ENCODE measurements at regions of chr6 and their contacts with region 1.

Region 1: GRCh38 chr6:26065952-26066380 is 21.3 kb upstream of the HFE start:
- DNase-seq: peak; percentile 62
- H3K4me3 ChIP-seq: no peak overlapping the region
- H3K27ac ChIP-seq: no peak overlapping the region
- H3K27me3 ChIP-seq: no peaks in the 10 kb centered on the region
- CTCF ChIP-seq: peak; percentile 91

Region 2: DNA sequence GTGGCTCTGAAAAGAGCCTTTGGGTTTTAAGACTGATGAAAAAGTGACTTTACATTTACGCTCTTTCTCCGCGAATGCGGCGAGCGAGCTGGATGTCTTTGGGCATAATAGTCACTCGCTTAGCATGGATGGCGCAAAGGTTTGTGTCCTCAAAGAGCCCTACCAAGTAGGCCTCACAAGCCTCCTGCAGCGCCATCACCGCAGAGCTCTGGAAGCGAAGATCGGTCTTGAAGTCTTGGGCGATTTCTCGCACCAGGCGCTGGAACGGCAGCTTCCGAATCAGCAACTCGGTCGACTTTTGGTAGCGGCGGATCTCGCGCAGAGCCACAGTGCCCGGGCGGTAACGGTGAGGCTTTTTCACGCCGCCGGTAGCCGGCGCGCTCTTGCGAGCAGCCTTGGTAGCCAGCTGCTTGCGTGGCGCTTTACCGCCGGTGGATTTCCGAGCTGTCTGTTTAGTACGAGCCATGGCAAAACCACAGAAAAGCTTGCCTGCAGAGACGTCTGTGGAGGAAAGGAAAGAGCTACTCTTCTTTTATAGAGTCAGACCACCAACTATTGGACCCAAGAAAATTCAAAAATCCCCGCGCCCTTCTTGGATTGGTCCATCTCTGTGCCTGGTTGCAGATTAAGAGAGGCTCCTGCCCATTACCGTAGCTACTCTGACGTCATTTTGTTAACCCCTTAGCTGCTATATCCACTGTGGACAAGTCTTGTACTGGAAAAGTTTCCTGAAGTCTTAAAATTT is 34.2 kb before region 1 on chr6:
- CTCF ChIA-PET with region 1: interaction called, 15 read pairs
- POLR2A ChIA-PET with region 1: interaction called, 3 read pairs
- DNase-seq: peak; percentile 87
- H3K4me3 ChIP-seq: peak overlapping the region; percentile 68
- H3K27ac ChIP-seq: peak overlapping the region; percentile 92
- H3K27me3 ChIP-seq: no peaks in the 10 kb centered on the region
- CTCF ChIP-seq: peak; percentile 33

Region 3: DNA sequence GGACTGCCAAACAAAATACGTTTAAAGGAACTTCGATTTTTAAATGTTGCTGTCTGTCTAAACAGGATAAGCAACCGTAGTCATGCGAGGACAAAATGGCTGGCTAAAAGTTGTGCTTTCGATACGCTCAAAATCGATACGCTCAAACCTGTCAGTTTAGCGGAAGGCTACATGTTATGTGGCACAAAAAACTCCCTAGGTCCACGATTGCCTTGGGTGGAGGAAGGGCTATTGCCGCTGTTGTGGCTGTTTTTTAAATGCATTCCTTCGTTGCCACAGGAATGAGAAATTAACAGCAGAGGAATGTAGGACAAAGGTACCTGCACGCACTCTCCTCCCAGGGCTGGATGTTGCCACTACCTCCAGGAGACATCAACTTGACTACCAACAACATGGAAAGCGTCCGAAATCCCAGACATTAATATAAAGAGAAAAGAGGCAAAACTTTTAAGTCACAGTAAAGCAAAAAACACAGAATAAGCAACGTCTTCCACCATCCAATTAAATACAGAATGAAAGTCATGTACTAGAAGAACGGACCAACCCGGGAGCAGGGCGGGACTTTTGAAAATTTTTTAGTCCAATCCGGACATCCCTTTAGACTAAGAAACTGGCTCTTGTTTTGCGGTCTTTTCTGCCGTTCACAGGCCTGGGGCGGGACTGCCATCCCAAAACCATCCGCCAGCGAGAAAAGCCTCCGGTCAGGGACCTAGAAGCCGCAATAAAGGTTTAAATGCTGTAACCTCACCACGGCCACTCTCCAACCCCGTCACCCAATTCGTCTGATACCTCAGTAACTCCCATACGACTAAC is 10.9 kb before region 1 on chr6:
- CTCF ChIA-PET with region 1: interaction called, 10 read pairs
- POLR2A ChIA-PET with region 1: no interaction called
- DNase-seq: peak; percentile 89
- H3K4me3 ChIP-seq: peak overlapping the region; percentile 77
- H3K27ac ChIP-seq: peak overlapping the region; percentile 90
- H3K27me3 ChIP-seq: no peaks in the 10 kb centered on the region
- CTCF ChIP-seq: no peak

Region 4: DNA sequence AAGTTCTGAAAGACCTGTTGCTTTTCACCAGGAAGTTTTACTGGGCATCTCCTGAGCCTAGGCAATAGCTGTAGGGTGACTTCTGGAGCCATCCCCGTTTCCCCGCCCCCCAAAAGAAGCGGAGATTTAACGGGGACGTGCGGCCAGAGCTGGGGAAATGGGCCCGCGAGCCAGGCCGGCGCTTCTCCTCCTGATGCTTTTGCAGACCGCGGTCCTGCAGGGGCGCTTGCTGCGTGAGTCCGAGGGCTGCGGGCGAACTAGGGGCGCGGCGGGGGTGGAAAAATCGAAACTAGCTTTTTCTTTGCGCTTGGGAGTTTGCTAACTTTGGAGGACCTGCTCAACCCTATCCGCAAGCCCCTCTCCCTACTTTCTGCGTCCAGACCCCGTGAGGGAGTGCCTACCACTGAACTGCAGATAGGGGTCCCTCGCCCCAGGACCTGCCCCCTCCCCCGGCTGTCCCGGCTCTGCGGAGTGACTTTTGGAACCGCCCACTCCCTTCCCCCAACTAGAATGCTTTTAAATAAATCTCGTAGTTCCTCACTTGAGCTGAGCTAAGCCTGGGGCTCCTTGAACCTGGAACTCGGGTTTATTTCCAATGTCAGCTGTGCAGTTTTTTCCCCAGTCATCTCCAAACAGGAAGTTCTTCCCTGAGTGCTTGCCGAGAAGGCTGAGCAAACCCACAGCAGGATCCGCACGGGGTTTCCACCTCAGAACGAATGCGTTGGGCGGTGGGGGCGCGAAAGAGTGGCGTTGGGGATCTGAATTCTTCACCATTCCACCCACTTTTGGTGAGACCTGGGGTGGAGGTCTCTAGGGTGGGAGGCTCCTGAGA is 21.5 kb after region 1 on chr6 and contains the start of gene HFE:
- CTCF ChIA-PET with region 1: interaction called, 858 read pairs
- POLR2A ChIA-PET with region 1: interaction called, 5 read pairs
- DNase-seq: no peak
- H3K4me3 ChIP-seq: peak within 1 kb of the TSS; percentile 77
- H3K27ac ChIP-seq: peak within 1 kb of the TSS; percentile 86
- H3K27me3 ChIP-seq: no peaks in the 10 kb centered on the region
- CTCF ChIP-seq: peak; percentile 24
- polyA plus RNA-seq, gene HFE: 19.5 and 21.4 TPM in 2 replicates

Region 5: DNA sequence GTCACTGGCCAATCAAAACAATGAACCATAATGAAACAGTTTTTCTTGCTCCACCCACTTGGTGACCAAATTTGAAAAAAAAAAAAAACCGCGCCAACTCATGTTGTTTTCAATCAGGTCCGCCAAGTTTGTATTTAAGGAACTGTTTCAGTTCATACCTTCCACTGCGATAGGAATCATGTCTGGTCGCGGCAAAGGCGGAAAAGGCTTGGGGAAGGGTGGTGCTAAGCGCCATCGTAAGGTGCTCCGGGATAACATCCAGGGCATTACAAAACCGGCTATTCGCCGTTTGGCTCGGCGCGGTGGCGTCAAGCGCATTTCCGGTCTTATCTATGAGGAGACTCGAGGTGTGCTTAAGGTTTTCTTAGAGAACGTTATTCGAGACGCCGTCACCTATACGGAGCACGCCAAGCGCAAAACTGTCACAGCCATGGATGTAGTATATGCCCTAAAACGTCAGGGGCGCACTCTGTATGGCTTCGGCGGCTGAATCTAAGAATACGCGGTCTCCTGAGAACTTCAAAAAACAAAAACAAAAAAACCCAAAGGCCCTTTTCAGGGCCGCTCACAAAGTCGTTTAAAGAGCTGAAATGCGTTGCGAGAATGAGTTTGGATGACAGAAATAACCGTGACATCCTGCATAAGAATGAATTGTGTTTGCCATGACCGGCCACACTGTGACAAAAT is 37.9 kb after region 1 on chr6:
- CTCF ChIA-PET with region 1: interaction called, 858 read pairs
- POLR2A ChIA-PET with region 1: interaction called, 6 read pairs
- DNase-seq: peak; percentile 88
- H3K4me3 ChIP-seq: peak overlapping the region; percentile 66
- H3K27ac ChIP-seq: peak overlapping the region; percentile 88
- H3K27me3 ChIP-seq: no peaks in the 10 kb centered on the region
- CTCF ChIP-seq: peak; percentile 62

Region 6: GRCh38 chr6:26249957-26250697 is 184.2 kb after region 1 on chr6:
- CTCF ChIA-PET with region 1: no interaction called
- POLR2A ChIA-PET with region 1: no interaction called
- DNase-seq: no peak
- H3K4me3 ChIP-seq: peak overlapping the region; percentile 77
- H3K27ac ChIP-seq: peak overlapping the region; percentile 87
- H3K27me3 ChIP-seq: no peaks in the 10 kb centered on the region
- CTCF ChIP-seq: peak; percentile 50

Region 7: GRCh38 chr6:26312501-26313390 is 246.8 kb after region 1 on chr6:
- CTCF ChIA-PET with region 1: no interaction called
- POLR2A ChIA-PET with region 1: no interaction called
- DNase-seq: no peak
- H3K4me3 ChIP-seq: peak overlapping the region; percentile 62
- H3K27ac ChIP-seq: no peak overlapping the region
- H3K27me3 ChIP-seq: no peaks in the 10 kb centered on the region
- CTCF ChIP-seq: no peak

Measured in AG04450 (cell line).